ENCODE measurements at regions of chr11 and their contacts with region 1.

Region 1: DNA sequence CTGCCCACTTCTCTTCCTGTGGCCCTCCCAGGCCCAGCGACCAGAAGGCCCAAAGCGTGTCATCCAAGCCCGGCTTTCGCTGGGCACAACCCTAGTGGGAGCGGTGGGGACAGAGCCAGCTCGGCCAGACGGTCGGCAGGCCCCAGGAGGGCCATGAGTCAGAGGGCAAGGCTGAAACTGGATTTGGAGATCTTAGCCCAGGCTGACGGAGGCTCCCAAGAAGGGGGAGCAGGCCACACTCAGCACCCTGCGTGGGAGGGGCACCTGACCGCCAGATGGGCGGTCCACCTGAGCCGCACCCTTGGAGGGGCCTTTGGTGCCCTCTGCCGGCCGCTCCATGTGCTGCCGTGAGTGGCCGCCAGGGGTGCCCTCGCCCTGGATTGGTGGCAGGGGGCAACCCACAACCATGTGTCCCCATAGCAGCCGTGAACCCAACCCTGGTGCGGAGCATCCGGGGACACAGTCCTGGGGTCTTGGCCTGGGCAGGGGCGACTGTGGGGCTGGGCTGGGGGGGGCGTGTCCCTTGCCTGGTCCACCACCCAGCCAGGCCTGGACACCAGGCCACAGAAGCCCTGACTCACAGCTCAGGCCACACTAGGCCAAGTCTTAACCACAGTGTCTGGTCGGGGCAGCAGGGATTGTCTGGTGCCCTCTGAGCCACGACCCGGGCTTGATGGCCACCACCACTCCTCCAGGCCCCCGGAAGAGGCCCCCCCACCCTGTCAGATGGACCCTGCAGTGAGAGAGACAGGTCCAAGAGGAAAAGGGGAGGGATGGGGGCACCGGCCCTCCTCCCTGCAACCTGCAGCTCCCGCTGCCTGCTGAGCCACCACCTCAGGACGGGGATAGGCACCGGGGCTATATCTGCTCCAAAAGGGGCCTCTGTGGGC is 19.2 kb upstream of the TALDO1 start:
- DNase-seq: peak; percentile 78 to 96 (median 92)
- ATAC-seq: peak; percentile 70 to 87 (median 84)
- H3K4me3 ChIP-seq: no peak overlapping the region
- H3K27ac ChIP-seq: peak overlapping the region; percentile 8 to 86 (median 18)
- H3K4me1 ChIP-seq: peaks cover 8 to 15% (median 11%) of the 10 kb centered on the region in 3 donors
- H3K27me3 ChIP-seq: no peaks in the 10 kb centered on the region
- CTCF ChIP-seq: peak; percentile 94 to 99 (median 96)

Region 2: DNA sequence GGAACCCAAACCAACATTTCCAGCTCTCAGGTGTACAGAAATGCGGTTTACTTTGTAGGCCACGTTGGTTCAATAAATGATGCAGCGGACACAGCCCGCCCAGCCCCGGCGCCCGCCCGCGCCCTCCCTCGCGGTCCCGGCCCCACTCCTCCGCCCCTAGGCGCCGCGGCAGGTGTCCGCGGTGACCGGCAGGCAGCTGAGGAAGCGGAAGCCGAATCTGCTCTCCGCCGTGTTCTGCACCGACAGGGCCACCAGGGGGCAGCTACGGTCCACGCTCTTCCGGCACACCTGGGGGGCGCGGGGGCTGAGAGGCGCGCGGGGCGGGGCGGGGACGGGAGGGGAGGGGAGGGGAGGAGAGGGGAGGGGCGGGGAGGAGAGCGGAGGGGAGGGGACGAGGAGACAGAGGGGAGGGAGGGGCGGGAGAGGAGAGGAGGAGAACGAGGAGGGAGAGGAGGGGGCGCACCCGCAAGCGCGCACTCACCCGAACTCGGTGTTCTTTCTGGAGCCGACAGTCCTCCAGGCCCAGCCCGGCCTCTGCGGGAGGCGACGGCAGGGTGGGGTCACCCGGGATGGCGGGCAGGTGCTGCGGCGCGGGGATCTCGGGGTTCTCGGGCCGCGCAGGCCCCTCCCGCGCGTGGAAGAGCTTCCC is 173.2 kb before region 1 on chr11:
- intact Hi-C with region 1: loop called in 2 of 3 experiments (anchors 5 to 10 kb)
- DNase-seq: peak; percentile 68 to 90 (median 85)
- ATAC-seq: peak; percentile 78 to 89 (median 84)
- H3K4me3 ChIP-seq: peak overlapping the region; percentile 23 to 57 (median 51)
- H3K27ac ChIP-seq: peak overlapping the region in 3 of 4 donors; percentile 44 to 48 (median 46)
- H3K4me1 ChIP-seq: peaks cover 0 to 8% (median 7%) of the 10 kb centered on the region in 3 donors
- H3K27me3 ChIP-seq: no peaks in the 10 kb centered on the region
- CTCF ChIP-seq: peak; percentile 31 to 58 (median 44)

Region 3: GRCh38 chr11:662689-663274 is 65.3 kb before region 1 on chr11:
- intact Hi-C with region 1: loop called in 2 of 3 experiments (anchors 5 kb)
- DNase-seq: peak; percentile 53 to 87 (median 78)
- ATAC-seq: peak; percentile 77 to 95 (median 86)
- H3K4me3 ChIP-seq: no peak overlapping the region
- H3K27ac ChIP-seq: no peak overlapping the region
- H3K4me1 ChIP-seq: no peaks in the 10 kb centered on the region
- H3K27me3 ChIP-seq: no peaks in the 10 kb centered on the region
- CTCF ChIP-seq: peak; percentile 33 to 64 (median 52)

Region 4: GRCh38 chr11:870127-870413 is 142.0 kb after region 1 on chr11:
- intact Hi-C with region 1: no loop called
- DNase-seq: no peak
- ATAC-seq: peak in 1 of 4 donors; percentile 11
- H3K4me3 ChIP-seq: no peak overlapping the region
- H3K27ac ChIP-seq: no peak overlapping the region
- H3K4me1 ChIP-seq: no peaks in the 10 kb centered on the region
- H3K27me3 ChIP-seq: no peaks in the 10 kb centered on the region
- CTCF ChIP-seq: no peak

Measured in pancreas (tissue), 10 donors.